Colonic mucosa (tissue), 4 donors: ENCODE measurements at regions of chr11 and their contacts with region 1.

Region 1: DNA sequence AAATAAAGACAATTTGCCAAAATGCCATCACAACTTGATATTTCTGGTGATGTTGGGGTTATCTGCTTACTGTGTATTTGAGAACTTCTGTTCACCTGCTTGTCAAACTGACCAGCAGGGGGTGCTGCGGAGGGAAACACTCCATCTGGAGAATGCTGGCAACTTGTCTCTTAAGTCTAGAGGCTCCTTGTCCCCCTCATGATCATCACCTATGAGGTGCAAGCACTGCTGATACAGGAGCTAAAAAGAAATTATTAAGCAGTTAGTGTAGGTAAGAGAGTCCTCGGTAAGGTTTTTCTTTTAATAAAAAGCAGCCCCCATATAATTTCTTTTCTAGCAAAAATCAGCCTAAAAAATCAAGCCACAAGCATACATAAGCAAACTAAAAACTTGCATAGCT is 32.7 kb upstream of the GLYATL1B start:
- DNase-seq: peak; percentile 75
- H3K4me3 ChIP-seq: no peak overlapping the region
- H3K27ac ChIP-seq: no peak overlapping the region
- H3K4me1 ChIP-seq: no peaks in the 10 kb centered on the region
- H3K27me3 ChIP-seq: no peaks in the 10 kb centered on the region
- CTCF ChIP-seq: peak; percentile 88

Region 2: DNA sequence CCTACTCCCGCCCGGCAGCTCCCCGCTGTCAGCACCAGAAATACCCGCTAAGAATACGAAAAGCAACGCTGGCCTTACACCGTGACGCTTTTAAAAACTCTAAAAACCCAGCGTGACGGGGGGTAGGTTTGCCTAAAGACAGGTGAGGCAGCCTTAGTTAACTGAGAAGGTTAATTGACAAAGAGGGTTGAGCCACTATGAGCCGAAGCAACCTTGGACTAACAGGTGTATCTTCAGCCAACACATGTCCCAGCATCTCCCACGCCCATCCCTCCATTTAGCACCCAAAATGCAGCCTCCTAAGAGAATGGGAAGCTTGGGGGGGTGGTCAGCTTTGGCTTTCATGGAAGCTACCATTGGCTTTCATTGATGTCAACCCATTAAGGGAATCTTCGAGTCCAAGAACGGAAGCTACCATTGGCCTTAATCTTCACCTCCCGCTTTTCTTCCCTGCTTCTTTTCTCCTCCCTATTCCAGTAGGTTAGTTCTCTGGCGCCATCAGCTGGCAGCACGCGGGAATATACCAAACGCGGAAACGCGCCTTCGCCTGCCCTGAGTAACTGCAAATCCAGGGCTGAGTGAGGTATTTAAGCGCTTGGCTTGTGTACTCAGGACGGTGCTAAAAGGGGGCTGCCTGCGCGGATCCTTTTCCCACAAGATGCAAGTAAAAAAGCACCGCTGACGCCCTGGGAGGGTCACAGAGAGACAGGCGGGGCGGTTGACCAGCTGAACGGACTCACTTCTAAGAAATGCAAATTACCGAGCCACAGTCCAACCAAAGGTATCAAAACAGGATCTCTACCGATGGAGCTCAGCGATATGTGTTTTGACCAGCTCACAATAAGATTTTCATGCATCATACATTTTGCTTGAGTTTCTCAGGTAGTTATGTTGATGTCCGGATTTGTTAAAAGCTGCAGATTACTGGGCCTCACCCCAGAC is 152.6 kb before region 1 on chr11:
- intact Hi-C with region 1: no loop called
- DNase-seq: peak; percentile 90
- H3K4me3 ChIP-seq: no peak overlapping the region
- H3K27ac ChIP-seq: no peak overlapping the region
- H3K4me1 ChIP-seq: no peaks in the 10 kb centered on the region
- H3K27me3 ChIP-seq: no peaks in the 10 kb centered on the region
- CTCF ChIP-seq: peak; percentile 16

Region 3: DNA sequence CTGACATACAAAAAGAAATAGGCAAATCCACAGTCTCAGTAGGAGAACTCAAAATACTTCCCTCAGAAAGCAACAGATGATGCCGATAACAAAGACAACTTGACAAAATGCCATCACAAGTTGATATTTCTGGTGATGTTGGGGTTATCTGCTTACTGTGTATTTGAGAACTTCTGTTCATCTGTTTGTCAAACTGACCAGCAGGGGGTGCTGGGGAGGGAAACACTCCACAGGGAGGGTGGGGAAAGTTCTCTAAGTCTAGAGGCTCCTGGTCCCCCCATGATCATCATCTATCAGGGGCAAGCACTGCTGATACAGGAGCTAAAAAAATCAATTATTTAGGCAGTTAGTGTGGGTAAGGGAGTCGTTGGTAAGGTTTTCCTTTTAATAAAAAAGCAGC is 94.9 kb before region 1 on chr11:
- intact Hi-C with region 1: loop called (anchors 2 kb)
- DNase-seq: peak; percentile 74
- H3K4me3 ChIP-seq: no peak overlapping the region
- H3K27ac ChIP-seq: no peak overlapping the region
- H3K4me1 ChIP-seq: no peaks in the 10 kb centered on the region
- H3K27me3 ChIP-seq: no peaks in the 10 kb centered on the region
- CTCF ChIP-seq: peak; percentile 42

Region 4: GRCh38 chr11:59135648-59136461 is 82.5 kb after region 1 on chr11:
- intact Hi-C with region 1: loop called (anchors 10 kb)
- DNase-seq: peak; percentile 87
- H3K4me3 ChIP-seq: no peak overlapping the region
- H3K27ac ChIP-seq: no peak overlapping the region
- H3K4me1 ChIP-seq: no peaks in the 10 kb centered on the region
- H3K27me3 ChIP-seq: no peaks in the 10 kb centered on the region
- CTCF ChIP-seq: peak; percentile 95